Head of caudate nucleus (tissue), 42 donors: ENCODE measurements at regions of chr7 and their contacts with region 1.

Region 1: DNA sequence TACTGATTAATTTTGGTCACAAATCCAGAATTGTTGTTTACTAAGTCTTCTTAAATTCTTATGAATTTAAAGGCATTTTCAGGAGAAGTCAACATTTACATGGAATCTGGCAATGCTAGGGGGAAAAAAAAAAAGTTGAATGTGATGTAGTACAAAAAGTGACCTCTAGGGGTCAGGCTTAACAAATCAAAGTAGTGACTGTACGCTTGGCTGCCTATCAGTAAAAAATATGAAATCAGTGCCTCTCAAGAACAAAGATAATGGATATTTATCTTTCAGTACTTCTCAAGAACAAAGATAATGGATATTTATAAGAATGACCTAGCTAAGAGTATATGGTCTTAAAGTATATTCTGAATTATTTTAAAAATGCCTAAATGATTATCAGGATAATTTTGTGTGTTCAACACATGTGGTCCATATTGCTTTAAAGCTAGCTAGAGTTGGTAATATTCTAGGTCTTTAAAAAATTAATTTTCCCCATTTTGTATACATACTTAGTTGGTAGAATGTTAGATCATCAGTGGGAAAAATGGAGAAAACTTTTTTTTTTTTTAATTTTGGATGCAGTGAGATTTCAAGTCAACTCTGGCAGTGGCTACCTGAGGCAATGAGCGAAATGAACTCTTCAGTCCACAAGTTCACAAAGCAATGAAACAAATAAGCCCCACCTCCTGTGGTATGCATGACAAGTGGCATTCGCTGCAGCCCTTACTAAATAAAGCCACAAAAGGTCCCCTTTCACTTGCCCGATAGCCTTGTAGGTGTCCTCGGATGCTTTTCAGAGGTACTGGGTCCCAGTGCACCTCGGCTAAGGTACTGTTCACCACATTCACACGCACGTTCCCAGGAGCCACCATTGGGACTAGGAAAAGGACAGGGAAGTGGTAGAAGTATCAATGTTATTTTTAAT is 51.2 kb upstream of the LAMB4 start:
- DNase-seq: peak in 1 of 42 donors; percentile 39

Region 2: GRCh38 chr7:108459931-108460551 is 278.7 kb after region 1 on chr7:
- intact Hi-C with region 1: loop called (anchors 5 kb)
- DNase-seq: peak in 28 of 42 donors; percentile 8 to 76 (median 54)

Region 3: DNA sequence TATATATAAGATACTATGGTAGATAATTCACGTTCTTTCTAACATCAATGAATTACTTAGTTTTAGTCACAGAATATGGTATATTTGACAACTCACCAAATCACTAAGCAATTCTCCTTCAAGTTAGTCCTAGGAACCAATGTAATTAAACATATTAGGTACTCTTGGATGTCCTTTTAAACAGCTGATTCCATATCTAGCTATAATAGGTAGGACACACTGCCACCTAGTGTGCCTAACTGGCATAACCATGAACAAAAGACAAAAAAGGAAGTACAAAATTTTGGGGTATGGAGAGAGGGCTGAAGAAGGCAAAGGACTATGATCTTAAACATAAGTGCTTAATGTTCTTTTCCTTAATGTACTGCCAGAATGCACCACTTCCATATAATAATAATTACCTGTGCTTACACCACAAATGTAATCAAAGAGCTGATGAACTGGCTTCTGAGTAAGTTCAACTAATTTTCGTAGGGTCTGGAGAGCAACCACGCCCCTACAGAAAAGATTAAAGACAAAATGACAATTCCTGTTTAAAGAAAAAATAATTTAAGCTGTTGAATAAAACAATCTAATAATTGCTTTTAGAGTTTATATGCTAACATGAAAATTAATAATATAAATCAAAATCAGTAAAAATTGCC is 315.9 kb after region 1 on chr7:
- intact Hi-C with region 1: loop called (anchors 5 kb)
- DNase-seq: peak in 29 of 42 donors; percentile 3 to 79 (median 41)